ENCODE measurements at regions of chr4 and their contacts with region 1.

Region 1: DNA sequence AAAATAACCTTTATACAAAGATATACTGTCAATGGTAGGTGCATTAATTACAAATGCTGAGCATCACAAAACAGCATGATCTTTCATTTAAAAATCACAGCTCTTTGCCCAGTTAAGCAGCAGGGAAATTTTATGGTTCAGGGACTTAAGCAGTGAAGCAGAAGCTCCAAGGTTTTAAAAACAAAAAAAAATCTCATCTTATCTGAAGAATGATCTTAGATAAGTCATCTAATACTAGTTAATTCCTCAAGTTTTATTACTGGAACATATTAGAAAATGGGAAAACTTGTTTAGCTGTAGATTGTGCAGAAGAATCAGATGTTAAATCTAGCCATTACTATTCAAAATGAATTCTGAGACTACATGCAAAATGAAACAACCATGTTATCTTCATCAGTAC is 289.9 kb downstream of the GASK1B start:
- DNase-seq: no peak
- ATAC-seq: no peak
- H3K4me3 ChIP-seq: no peak overlapping the region
- H3K4me3 Mint-ChIP-seq: no peak overlapping the region
- H3K27ac ChIP-seq: no peak overlapping the region
- H3K27ac Mint-ChIP-seq: no peak overlapping the region
- H3K4me1 ChIP-seq: no peaks in the 10 kb centered on the region
- H3K4me1 Mint-ChIP-seq: no peaks in the 10 kb centered on the region
- H3K27me3 ChIP-seq: no peaks in the 10 kb centered on the region
- H3K27me3 Mint-ChIP-seq: no peaks in the 10 kb centered on the region

Region 2: GRCh38 chr4:157934151-157934550 is 51.2 kb after region 1 on chr4:
- CTCF ChIA-PET with region 1: no interaction called
- POLR2A ChIA-PET with region 1: no interaction called
- intact Hi-C with region 1: loop called in 1 of 2 experiments (anchors 10 kb)
- DNase-seq: no peak
- ATAC-seq: no peak
- H3K4me3 ChIP-seq: no peak overlapping the region
- H3K4me3 Mint-ChIP-seq: no peak overlapping the region
- H3K27ac ChIP-seq: no peak overlapping the region
- H3K27ac Mint-ChIP-seq: no peak overlapping the region
- H3K4me1 ChIP-seq: no peaks in the 10 kb centered on the region
- H3K4me1 Mint-ChIP-seq: no peaks in the 10 kb centered on the region
- H3K27me3 ChIP-seq: no peaks in the 10 kb centered on the region
- H3K27me3 Mint-ChIP-seq: no peaks in the 10 kb centered on the region